Activated T-helper 2 cell treated with anti-CD3 and anti-CD28 coated beads, Interferon-gamma antibody, Interleukin-2, Interleukin-4, amounts not matched to agents 10 μg/mL and 5 μg/mL and 100 μg/mL, durations not matched to agents 14 hours and 24 hours and 36 hours (primary cell): ENCODE measurements at regions of chr19 and their contacts with region 1.

Region 1: GRCh38 chr19:58408152-58409009 is at the start of gene ZNF584:
- DNase-seq: peak; percentile 89
- H3K4me3 Mint-ChIP-seq: peak within 1 kb of the TSS; percentile 85
- H3K27ac Mint-ChIP-seq: peak within 1 kb of the TSS; percentile 90
- H3K4me1 Mint-ChIP-seq: peaks cover 32% of the 10 kb centered on the region
- H3K27me3 Mint-ChIP-seq: no peaks in the 10 kb centered on the region
- total RNA-seq, gene ZNF584: 11.2 and 12.2 TPM in 2 replicates

Region 2: GRCh38 chr19:58182989-58183816 is 225.2 kb before region 1 on chr19 and contains the start of gene ZNF274:
- intact Hi-C with region 1: loop called (anchors 5 kb)
- DNase-seq: peak; percentile 88
- H3K4me3 Mint-ChIP-seq: peak within 1 kb of the TSS; percentile 89
- H3K27ac Mint-ChIP-seq: peak within 1 kb of the TSS; percentile 94
- H3K4me1 Mint-ChIP-seq: peaks cover 8% of the 10 kb centered on the region
- H3K27me3 Mint-ChIP-seq: no peaks in the 10 kb centered on the region
- total RNA-seq, gene ZNF274: 18.4 and 19.9 TPM in 2 replicates

Region 3: GRCh38 chr19:58305065-58305931 is 103.1 kb before region 1 on chr19 and contains the start of gene ERVK3-1:
- intact Hi-C with region 1: loop called (anchors 2 kb)
- DNase-seq: peak; percentile 93
- H3K4me3 Mint-ChIP-seq: peak within 1 kb of the TSS; percentile 98
- H3K27ac Mint-ChIP-seq: peak within 1 kb of the TSS; percentile 97
- H3K4me1 Mint-ChIP-seq: peaks cover 37% of the 10 kb centered on the region
- H3K27me3 Mint-ChIP-seq: no peaks in the 10 kb centered on the region
- total RNA-seq, gene ERVK3-1: 64.2 and 65.0 TPM in 2 replicates

Region 4: DNA sequence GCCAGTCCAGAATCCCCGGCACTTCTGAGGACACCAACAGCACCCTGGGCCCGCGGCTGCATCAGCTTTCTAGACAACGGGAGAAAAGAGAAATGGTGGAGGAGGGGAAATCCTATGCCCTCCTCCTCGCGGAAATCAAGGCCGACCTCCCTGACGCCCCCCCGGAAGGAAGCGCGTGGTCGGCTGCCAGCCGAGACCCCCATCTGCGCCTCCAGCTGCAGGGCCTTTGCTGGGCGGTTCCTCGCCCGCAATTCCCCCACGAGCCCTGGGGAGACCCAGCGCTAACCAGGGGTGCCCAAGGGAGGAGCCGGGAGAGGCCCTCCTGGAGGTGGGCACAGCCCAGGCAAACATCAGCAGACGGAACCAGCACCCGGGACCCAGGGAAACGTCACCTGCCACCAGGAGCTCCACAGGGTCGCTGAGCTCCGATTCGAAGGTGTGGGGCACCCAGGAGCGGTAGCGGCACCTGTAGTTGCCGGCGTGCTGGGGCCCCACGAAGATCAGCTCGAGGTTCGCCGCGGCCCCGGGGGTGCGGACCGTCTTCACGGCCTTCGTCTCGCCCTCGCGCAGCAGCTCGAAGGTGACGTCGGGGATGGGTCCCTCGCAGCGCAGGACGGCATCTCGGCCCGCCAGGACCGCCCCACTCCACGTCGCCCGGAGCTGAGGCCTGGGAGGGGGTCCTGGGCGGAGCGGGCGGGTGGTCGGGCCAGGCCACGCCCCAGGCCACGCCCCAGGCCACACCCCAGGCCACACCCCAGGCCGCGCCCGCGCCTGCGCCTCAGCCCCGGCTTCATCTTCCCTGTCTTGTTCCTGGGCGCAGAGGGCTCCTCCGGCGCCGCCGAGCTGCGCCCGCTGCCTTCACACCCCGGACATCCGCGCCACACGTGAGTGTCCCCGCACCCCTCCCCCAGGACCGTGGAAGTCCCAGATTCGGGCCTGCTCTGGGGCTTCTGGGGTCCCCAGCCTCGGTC is 61.1 kb before region 1 on chr19:
- intact Hi-C with region 1: no loop called
- DNase-seq: peak; percentile 60
- H3K4me3 Mint-ChIP-seq: peak overlapping the region; percentile 95
- H3K27ac Mint-ChIP-seq: peak overlapping the region; percentile 71
- H3K4me1 Mint-ChIP-seq: peaks cover 15% of the 10 kb centered on the region
- H3K27me3 Mint-ChIP-seq: no peaks in the 10 kb centered on the region

Region 5: DNA sequence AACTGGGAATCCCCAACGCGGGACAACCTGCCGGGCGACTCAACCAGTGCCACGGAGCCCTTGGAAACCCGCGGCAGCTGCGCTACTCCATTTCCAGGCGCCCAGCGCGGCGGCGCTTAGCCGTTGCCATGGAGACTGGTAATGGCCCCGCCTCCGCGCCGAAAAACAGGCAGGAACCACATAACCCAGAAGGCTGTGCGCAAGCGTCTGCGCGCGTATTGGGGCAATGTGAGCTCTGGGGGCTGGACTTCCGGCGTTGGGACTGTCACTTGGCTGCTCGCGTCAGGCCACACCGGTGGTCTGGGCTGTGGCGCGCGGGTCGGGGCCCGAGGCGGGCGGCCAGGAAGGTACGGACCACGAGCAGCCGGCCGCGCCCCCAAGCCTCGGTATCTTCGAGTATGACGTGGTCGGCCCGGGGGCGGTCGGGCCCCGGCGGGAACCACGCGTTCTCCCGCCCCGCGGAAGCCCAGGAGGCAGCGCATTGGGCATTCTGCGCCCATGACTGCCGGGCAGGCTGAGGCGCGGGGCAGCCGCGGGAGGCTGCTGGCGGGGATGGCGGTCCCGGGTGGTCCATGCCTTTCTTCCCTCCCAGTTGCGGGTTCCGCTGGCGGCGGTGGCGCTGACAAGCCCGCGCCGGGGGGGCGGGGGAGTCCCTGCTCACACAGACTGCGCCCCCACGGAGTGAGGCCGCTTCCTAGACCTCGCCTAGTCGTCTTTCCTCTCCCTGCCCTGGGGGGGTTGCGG is 43.1 kb after region 1 on chr19 and contains the start of gene ZNF324B:
- intact Hi-C with region 1: loop called (anchors 1 kb)
- DNase-seq: peak; percentile 95
- H3K4me3 Mint-ChIP-seq: peak within 1 kb of the TSS; percentile 75
- H3K27ac Mint-ChIP-seq: no peak within 1 kb of the TSS
- H3K4me1 Mint-ChIP-seq: peaks cover 19% of the 10 kb centered on the region
- H3K27me3 Mint-ChIP-seq: peaks cover 3% of the 10 kb centered on the region
- total RNA-seq, gene ZNF324B: 9.6 and 11.3 TPM in 2 replicates

Region 6: GRCh38 chr19:58499021-58499927 is 90.9 kb after region 1 on chr19:
- intact Hi-C with region 1: loop called (anchors 1 kb)
- DNase-seq: peak; percentile 96
- H3K4me3 Mint-ChIP-seq: peak overlapping the region; percentile 99
- H3K27ac Mint-ChIP-seq: peak overlapping the region; percentile 97
- H3K4me1 Mint-ChIP-seq: peaks cover 21% of the 10 kb centered on the region
- H3K27me3 Mint-ChIP-seq: no peaks in the 10 kb centered on the region